ENCODE measurements at regions of chr3 and their contacts with region 1.

Region 1: DNA sequence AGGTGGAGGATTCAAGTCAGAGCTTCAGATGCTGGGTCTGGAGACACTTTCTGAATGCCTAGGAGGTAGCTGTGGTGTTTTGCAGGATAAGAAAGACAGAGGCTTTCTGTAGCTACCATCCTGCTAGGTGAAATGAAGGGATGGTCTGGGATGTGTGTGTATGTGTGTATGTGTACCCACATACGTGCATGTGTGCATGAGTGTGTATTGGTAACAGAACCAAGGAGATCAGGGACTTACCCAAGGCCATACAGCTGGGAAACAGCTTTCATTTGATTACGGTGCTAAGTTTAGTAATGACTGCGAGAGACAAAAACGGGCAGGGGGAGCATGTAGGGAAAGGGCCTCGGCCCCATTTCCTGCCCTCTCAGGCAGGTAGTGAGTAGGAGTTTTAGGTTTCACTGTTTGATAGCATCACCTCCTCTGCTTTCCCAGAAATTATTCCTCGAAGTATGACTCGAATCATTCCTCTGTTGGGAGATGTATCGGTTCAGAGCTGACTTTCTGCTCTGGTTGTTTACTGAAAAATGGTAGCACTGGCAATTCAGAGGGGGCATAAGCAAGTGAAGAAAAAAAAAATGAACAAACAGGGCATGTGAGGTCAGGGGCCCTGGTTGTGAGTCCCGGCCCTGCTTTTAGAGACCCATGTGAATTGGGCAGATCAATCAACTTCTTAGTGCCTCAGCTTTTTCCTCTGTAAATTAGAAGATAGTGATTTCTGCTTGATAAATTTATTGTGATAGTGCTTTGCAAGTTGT is 130.7 kb downstream of the LPP start:
- DNase-seq: peak; percentile 26
- H3K4me3 Mint-ChIP-seq: peak overlapping the region; percentile 57
- H3K27ac Mint-ChIP-seq: peak overlapping the region; percentile 90
- H3K4me1 Mint-ChIP-seq: peaks cover 55% of the 10 kb centered on the region
- H3K27me3 Mint-ChIP-seq: peaks cover 2% of the 10 kb centered on the region

Region 2: GRCh38 chr3:187986514-187986934 is 298.1 kb before region 1 on chr3:
- intact Hi-C with region 1: no loop called
- DNase-seq: peak; percentile 34
- H3K4me3 Mint-ChIP-seq: peak overlapping the region; percentile 21
- H3K27ac Mint-ChIP-seq: peak overlapping the region; percentile 82
- H3K4me1 Mint-ChIP-seq: peaks cover 70% of the 10 kb centered on the region
- H3K27me3 Mint-ChIP-seq: no peaks in the 10 kb centered on the region

Region 3: GRCh38 chr3:188170461-188171459 is 113.9 kb before region 1 on chr3:
- intact Hi-C with region 1: loop called (anchors 2 kb)
- DNase-seq: no peak
- H3K4me3 Mint-ChIP-seq: peak overlapping the region; percentile 9
- H3K27ac Mint-ChIP-seq: peak overlapping the region; percentile 49
- H3K4me1 Mint-ChIP-seq: peaks cover 52% of the 10 kb centered on the region
- H3K27me3 Mint-ChIP-seq: no peaks in the 10 kb centered on the region

Region 4: DNA sequence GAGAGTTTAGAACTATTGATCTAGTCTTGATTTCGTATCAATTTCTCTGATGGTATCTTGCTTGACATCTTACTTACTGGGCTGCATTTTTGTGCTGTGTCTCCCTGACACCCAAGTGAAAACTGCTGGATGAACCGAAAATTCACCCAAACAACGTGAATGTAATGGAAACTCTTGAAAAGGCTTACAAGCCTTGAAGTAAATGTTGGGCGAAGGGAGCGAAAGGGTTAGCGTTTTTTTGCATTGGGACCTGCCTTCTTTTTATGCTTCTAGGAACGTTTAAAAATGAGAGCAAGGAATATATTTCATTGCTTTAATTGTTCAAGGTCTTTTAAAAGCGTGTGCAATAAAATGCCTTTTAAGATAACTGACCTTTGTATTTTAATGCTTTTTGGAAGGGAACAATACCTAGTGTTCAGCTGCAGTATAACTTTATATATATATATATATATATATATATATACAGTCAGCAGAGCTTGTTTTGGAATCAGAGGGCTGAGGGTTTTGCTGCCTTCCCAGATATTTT is 36.5 kb before region 1 on chr3:
- intact Hi-C with region 1: no loop called
- DNase-seq: no peak
- H3K4me3 Mint-ChIP-seq: no peak overlapping the region
- H3K27ac Mint-ChIP-seq: no peak overlapping the region
- H3K4me1 Mint-ChIP-seq: peaks cover 12% of the 10 kb centered on the region
- H3K27me3 Mint-ChIP-seq: no peaks in the 10 kb centered on the region

Region 5: GRCh38 chr3:188294823-188295487 is 10.3 kb after region 1 on chr3:
- intact Hi-C with region 1: loop called (anchors 1 kb)
- DNase-seq: no peak
- H3K4me3 Mint-ChIP-seq: no peak overlapping the region
- H3K27ac Mint-ChIP-seq: peak overlapping the region; percentile 33
- H3K4me1 Mint-ChIP-seq: peaks cover 86% of the 10 kb centered on the region
- H3K27me3 Mint-ChIP-seq: no peaks in the 10 kb centered on the region

Region 6: DNA sequence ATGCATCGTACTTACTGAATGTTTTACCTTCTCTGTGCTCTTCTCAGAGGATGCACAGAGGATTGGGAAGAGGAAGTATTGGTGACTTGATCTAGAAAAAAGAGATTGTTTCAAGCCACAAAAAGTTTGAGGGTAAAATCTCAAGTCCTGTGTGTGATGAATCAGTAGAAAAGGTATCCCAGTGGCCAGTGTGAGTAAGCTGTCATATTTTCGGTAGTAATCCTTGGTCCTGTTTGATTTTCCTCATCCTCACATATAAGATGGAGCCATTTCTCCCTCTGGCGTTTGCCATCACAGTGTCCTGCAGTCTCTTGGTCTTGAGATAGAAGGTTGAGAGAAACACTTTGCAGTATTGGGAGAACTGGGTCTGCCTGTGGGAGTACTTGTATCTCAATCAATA is 36.1 kb after region 1 on chr3:
- intact Hi-C with region 1: loop called (anchors 1 kb)
- DNase-seq: no peak
- H3K4me3 Mint-ChIP-seq: no peak overlapping the region
- H3K27ac Mint-ChIP-seq: no peak overlapping the region
- H3K4me1 Mint-ChIP-seq: peaks cover 49% of the 10 kb centered on the region
- H3K27me3 Mint-ChIP-seq: peaks cover 1% of the 10 kb centered on the region

Region 7: DNA sequence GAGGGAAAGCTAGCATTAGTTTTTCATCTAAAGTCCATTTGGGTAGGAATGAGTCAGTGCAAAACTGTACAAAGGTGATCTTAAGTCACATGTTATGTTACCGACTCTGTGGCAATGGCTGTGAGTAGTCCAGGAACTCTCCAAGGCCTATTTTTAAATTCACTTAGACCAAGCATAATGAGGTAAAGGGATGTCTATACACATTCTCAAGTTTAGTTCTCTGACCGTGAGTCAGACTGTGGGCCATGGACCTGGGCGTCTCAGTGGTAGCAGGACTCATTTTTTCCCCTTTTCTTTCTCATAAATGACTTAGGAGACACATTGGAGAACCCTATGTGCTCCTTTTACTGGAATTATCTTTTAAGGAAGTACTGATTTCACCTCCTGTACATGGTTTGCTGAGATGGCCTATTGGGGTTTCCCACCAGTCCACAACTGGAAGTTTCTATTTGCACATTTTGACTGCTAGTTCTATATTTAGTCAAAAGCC is 398.4 kb after region 1 on chr3:
- intact Hi-C with region 1: loop called (anchors 1 kb)
- DNase-seq: no peak
- H3K4me3 Mint-ChIP-seq: no peak overlapping the region
- H3K27ac Mint-ChIP-seq: peak overlapping the region; percentile 74
- H3K4me1 Mint-ChIP-seq: peaks cover 28% of the 10 kb centered on the region
- H3K27me3 Mint-ChIP-seq: no peaks in the 10 kb centered on the region